ENCODE measurements at regions of chr14 and their contacts with region 1.

Region 1: DNA sequence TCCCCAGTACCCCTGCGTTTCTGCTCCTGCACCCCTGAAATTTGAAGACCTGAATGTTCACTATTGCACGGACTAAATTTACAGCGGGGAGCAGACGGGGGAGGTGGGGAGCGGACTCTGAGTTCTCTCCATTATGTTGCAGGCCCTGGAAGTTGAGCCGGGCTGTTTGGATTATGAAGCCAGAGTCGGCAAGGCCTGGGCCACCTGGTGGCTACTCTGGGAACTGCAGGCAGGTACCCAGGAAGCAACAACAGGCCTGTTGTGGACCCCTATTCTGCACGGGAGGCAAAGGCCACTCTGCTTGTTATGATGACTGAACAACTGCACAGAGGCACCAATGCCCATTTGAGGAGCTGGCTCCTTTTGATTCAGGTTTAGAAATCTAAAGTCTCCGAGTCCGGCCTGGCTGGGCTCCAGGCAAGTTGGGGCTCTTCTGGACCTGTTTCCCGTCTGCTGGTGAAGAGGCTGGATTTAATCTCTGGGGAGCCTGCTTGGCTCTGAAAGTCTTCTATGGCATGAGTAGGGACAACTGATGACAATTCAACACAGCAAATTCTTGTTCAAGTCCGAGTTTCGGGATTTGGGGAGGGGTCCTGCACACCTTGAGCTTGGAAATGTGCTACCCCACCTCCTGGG is 34.1 kb upstream of the FAM181A start:
- DNase-seq: peak; percentile 45
- ATAC-seq: peak; percentile 98
- H3K4me3 ChIP-seq: no peak overlapping the region
- H3K27ac ChIP-seq: no peak overlapping the region
- H3K4me1 ChIP-seq: no peaks in the 10 kb centered on the region
- H3K27me3 ChIP-seq: peaks cover 20% of the 10 kb centered on the region
- CTCF ChIP-seq: peak; percentile 72
- POLR2A ChIP-seq: no peak
- RAD21 ChIP-seq: peak; percentile 49

Region 2: DNA sequence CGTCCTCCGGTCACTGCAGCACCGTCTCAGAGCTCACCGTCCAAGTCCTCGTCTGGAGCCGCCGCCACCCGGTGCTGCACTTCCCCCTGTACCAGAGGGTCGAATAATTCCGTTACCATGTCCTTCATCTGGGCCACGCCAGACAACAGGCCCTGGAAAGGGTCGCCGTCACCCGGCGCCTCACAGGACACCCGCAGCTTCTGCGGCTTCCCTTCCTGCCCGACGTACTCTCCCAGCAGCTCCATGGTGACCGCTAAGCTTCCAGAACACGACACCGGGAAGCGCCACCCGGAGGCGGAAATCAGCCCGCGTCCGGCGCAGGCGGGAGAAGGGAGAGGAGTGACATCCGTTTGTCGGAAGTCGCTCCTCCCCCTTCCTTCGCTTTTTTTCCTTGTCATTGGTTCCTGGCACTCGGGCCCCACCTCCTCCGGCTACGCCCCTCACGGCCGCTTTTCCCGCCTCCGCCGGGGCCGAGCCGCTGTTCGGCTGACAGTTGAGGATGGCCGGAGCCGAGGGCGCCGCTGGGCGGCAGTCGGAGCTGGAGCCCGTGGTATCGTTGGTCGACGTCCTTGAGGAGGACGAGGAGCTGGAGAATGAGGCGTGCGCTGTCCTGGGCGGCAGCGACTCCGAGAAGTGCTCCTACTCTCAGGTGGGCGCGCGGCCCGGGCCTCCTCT is 686.1 kb before region 1 on chr14 and contains the starts of genes GON7 and UBR7:
- CTCF ChIA-PET with region 1: no interaction called
- POLR2A ChIA-PET with region 1: no interaction called
- dilution Hi-C with region 1: no loop called
- in situ Hi-C with region 1: no loop called
- intact Hi-C with region 1: loop called (anchors 1 kb)
- DNase-seq: peak; percentile 96
- ATAC-seq: peak; percentile 95
- H3K4me3 ChIP-seq: peak within 1 kb of the TSS; percentile 88
- H3K27ac ChIP-seq: peak within 1 kb of the TSS; percentile 51
- H3K4me1 ChIP-seq: peaks cover 2% of the 10 kb centered on the region; the same call in 1 of the 2 replicates
- H3K27me3 ChIP-seq: no peaks in the 10 kb centered on the region
- CTCF ChIP-seq: peak; percentile 44
- POLR2A ChIP-seq: peak; percentile 80
- RAD21 ChIP-seq: no peak
- total RNA-seq, gene GON7: 4.3 and 10.3 TPM in 2 replicates
- total RNA-seq, gene UBR7: 29.4 and 55.8 TPM in 2 replicates

Region 3: DNA sequence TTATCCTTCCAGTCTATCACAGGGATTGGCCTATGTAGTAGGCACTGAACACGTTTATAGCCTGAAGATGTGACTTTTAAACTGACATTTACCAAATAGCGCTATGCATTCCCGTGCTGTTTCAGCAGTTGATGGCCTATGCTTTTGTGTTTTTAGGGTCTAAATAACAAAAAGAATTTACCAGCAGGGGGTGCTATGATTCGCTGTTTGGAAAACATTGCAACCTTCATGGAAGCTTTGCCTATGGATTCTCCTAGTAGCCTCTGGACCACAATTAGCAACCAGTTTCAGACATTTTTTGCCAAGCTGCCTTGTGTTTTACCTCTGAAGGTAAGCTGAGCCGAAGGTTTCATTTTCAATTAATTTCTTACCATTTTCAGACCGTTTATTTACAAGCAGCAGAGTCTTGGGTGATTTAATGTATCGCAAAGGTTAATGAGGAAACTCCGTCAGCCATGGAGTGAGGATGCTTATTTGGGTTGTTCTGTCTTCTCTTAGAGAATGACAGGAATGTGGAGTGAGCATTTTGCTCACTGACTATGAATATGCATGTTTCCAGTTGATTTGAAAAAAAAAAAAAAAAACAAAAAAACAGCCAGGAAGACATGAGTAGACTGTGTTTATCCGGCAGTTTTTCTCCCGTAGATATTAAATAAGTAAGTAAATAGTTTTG is 237.8 kb before region 1 on chr14:
- CTCF ChIA-PET with region 1: no interaction called
- POLR2A ChIA-PET with region 1: no interaction called
- dilution Hi-C with region 1: no loop called
- in situ Hi-C with region 1: no loop called
- intact Hi-C with region 1: loop called (anchors 2 kb)
- DNase-seq: peak; percentile 35
- ATAC-seq: no peak
- H3K4me3 ChIP-seq: no peak overlapping the region
- H3K27ac ChIP-seq: no peak overlapping the region
- H3K4me1 ChIP-seq: no peaks in the 10 kb centered on the region
- H3K27me3 ChIP-seq: no peaks in the 10 kb centered on the region
- CTCF ChIP-seq: peak; percentile 52
- POLR2A ChIP-seq: no peak
- RAD21 ChIP-seq: peak; percentile 55

Region 4: DNA sequence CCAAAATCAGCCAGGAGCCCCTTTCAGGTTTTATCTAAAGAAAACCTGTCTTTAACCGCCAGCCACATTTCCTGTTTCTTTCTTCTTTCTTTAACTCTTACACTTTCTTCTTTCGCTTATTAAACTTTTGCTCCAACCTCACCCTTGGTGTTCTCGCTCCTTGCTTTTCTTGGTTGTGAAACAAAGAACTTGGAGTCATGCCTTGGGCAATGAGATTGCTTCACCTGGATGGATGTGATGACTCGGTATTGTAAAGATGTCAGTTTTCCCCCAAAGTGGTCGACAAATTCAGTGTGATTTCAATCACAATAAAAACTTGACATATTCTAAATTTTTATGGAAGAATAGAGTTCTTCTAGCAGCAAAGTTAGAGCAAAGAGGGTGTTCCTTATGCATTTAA is 1837.1 kb after region 1 on chr14:
- CTCF ChIA-PET with region 1: no interaction called
- POLR2A ChIA-PET with region 1: no interaction called
- dilution Hi-C with region 1: no loop called
- in situ Hi-C with region 1: no loop called
- intact Hi-C with region 1: loop called (anchors 5 kb)
- DNase-seq: no peak
- ATAC-seq: no peak
- H3K4me3 ChIP-seq: no peak overlapping the region
- H3K27ac ChIP-seq: no peak overlapping the region
- H3K4me1 ChIP-seq: no peaks in the 10 kb centered on the region
- H3K27me3 ChIP-seq: no peaks in the 10 kb centered on the region
- CTCF ChIP-seq: no peak
- POLR2A ChIP-seq: no peak
- RAD21 ChIP-seq: no peak

Measured in IMR-90 (cell line).